Heart right ventricle (tissue), 16 donors: ENCODE measurements at regions of chr4 and their contacts with region 1.

Region 1: GRCh38 chr4:103046416-103047290 is 27.1 kb upstream of the SLC9B1 start:
- DNase-seq: peak in 1 of 2 donors; percentile 18
- ATAC-seq: peak in 7 of 8 donors; percentile 61 to 83 (median 78)
- H3K4me3 ChIP-seq: no peak overlapping the region
- H3K27ac ChIP-seq: no peak overlapping the region
- H3K4me1 ChIP-seq: no peaks in the 10 kb centered on the region
- H3K27me3 ChIP-seq: no peaks in the 10 kb centered on the region
- CTCF ChIP-seq: peak; percentile 31 to 75 (median 70)

Region 2: DNA sequence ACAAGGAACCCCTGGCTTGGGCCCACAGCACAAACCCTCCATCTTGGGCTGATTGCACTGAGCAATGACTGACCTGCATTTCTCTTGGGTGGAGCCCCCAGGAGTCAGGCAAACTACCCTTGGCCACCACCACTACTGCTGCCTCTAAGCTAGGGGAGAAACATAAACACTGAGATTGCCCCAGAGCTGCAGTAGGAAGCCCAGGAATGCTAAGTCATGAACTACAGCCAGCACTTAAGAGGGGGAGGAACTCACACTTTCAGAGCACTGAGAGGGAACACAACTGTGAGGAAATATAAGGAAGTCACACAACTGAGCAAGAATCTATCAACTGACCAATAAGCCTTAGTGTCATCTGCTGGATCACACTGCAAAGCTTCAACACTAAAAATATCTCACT is 1587.7 kb before region 1 on chr4:
- intact Hi-C with region 1: no loop called
- DNase-seq: no peak
- ATAC-seq: no peak
- H3K4me3 ChIP-seq: no peak overlapping the region
- H3K27ac ChIP-seq: no peak overlapping the region
- H3K4me1 ChIP-seq: peaks cover 0 to 7% (median 0%) of the 10 kb centered on the region in 9 donors
- H3K27me3 ChIP-seq: no peaks in the 10 kb centered on the region
- CTCF ChIP-seq: no peak

Region 3: GRCh38 chr4:103091601-103092223 is 45.1 kb after region 1 on chr4:
- intact Hi-C with region 1: loop called in 5 of 10 experiments (anchors 5 to 10 kb)
- DNase-seq: no peak
- ATAC-seq: peak in 3 of 8 donors; percentile 19 to 48 (median 45)
- H3K4me3 ChIP-seq: no peak overlapping the region
- H3K27ac ChIP-seq: no peak overlapping the region
- H3K4me1 ChIP-seq: peaks cover 0 to 14% (median 0%) of the 10 kb centered on the region in 9 donors
- H3K27me3 ChIP-seq: no peaks in the 10 kb centered on the region
- CTCF ChIP-seq: peak in 7 of 9 donors; percentile 27 to 58 (median 54)

Region 4: DNA sequence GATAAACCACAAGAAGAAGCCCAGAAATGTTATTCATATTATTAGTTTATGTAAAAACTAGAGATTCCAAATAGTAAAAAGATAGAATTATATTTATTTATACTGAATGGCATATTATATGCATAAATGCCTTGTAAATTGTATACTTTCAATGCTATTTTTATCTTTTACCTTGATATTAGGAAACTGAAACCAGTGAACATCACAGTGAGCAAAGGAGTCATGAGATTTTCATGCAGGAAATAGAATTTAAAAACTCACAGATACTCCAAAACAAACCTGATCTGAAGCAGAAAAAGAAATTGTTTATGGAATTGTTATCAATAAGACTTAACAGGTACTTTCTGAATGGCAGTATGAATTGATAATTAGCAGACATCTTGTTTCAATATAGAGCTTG is 358.8 kb after region 1 on chr4:
- intact Hi-C with region 1: no loop called
- DNase-seq: no peak
- ATAC-seq: no peak
- H3K4me3 ChIP-seq: no peak overlapping the region
- H3K27ac ChIP-seq: no peak overlapping the region
- H3K4me1 ChIP-seq: no peaks in the 10 kb centered on the region
- H3K27me3 ChIP-seq: no peaks in the 10 kb centered on the region
- CTCF ChIP-seq: no peak